Left ventricle myocardium inferior (tissue), 1 donor: ENCODE measurements at regions of chr19 and their contacts with region 1.

Region 1: GRCh38 chr19:33406521-33407139 is 33.1 kb downstream of the CEBPG start:
- DNase-seq: peak; percentile 69
- H3K4me3 ChIP-seq: no peak overlapping the region
- H3K27ac ChIP-seq: no peak overlapping the region
- H3K4me1 ChIP-seq: peaks cover 26% of the 10 kb centered on the region
- H3K27me3 ChIP-seq: no peaks in the 10 kb centered on the region
- CTCF ChIP-seq: peak; percentile 96

Region 2: GRCh38 chr19:33176670-33177416 is 229.8 kb before region 1 on chr19:
- intact Hi-C with region 1: no loop called
- DNase-seq: peak; percentile 95
- H3K4me3 ChIP-seq: peak overlapping the region; percentile 89
- H3K27ac ChIP-seq: peak overlapping the region; percentile 97
- H3K4me1 ChIP-seq: peaks cover 47% of the 10 kb centered on the region
- H3K27me3 ChIP-seq: no peaks in the 10 kb centered on the region
- CTCF ChIP-seq: peak; percentile 42

Region 3: DNA sequence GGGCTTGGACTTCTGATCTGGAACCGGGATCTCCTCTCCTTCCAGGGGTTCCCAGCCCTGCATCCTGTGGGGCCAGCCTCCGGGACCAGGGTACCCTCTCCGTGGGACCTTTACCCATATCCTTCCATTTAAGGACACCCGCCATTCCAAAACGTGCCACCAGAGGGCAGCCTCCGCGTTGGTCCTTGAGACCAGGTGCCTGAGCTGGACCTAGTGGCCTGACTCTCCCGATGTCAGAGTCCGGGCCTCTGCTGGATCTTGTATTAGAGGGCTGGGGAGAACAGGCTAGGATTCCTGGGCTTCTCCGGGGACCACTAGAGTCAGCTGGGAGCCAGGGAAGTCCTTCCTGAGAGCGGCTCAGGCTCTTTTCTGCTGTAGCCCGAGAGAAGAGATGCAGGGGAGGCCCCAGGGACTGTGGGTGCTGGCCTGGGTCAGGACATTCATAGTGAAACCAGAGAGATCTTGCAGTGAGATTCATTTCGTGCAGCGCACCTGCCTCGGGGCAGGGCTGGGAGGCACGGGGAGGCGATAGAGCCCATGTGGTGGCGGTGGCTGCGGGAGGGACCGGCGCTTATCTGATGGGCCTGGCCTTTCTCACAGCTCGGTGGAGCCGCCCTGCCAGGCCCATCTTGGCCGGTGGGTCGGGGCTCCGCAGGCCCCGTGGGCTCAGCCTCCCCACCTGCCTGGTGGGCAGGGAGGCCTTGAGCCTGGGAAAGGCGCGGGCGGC is 171.2 kb before region 1 on chr19:
- intact Hi-C with region 1: loop called (anchors 5 kb)
- DNase-seq: peak; percentile 81
- H3K4me3 ChIP-seq: no peak overlapping the region
- H3K27ac ChIP-seq: no peak overlapping the region
- H3K4me1 ChIP-seq: no peaks in the 10 kb centered on the region
- H3K27me3 ChIP-seq: peaks cover 77% of the 10 kb centered on the region
- CTCF ChIP-seq: peak; percentile 94

Region 4: GRCh38 chr19:33476213-33476612 is 69.6 kb after region 1 on chr19:
- intact Hi-C with region 1: no loop called
- DNase-seq: no peak
- H3K4me3 ChIP-seq: no peak overlapping the region
- H3K27ac ChIP-seq: no peak overlapping the region
- H3K4me1 ChIP-seq: no peaks in the 10 kb centered on the region
- H3K27me3 ChIP-seq: no peaks in the 10 kb centered on the region
- CTCF ChIP-seq: no peak